PC-3 (cell line): ENCODE measurements at regions of chr22 and their contacts with region 1.

Region 1: GRCh38 chr22:26444777-26445176 is 15.7 kb downstream of the ASPHD2 start:
- DNase-seq: no peak
- ATAC-seq: no peak
- H3K4me3 ChIP-seq: no peak overlapping the region
- H3K27ac ChIP-seq: no peak overlapping the region
- H3K4me1 ChIP-seq: no peaks in the 10 kb centered on the region
- H3K27me3 ChIP-seq: no peaks in the 10 kb centered on the region
- CTCF ChIP-seq: no peak

Region 2: GRCh38 chr22:25182131-25183110 is 1262.4 kb before region 1 on chr22:
- CTCF ChIA-PET with region 1: interaction called, 11 read pairs
- POLR2A ChIA-PET with region 1: no interaction called
- intact Hi-C with region 1: no loop called
- DNase-seq: no peak
- ATAC-seq: no peak
- H3K4me3 ChIP-seq: no peak overlapping the region
- H3K27ac ChIP-seq: no peak overlapping the region
- H3K4me1 ChIP-seq: no peaks in the 10 kb centered on the region
- H3K27me3 ChIP-seq: no peaks in the 10 kb centered on the region
- CTCF ChIP-seq: no peak

Region 3: DNA sequence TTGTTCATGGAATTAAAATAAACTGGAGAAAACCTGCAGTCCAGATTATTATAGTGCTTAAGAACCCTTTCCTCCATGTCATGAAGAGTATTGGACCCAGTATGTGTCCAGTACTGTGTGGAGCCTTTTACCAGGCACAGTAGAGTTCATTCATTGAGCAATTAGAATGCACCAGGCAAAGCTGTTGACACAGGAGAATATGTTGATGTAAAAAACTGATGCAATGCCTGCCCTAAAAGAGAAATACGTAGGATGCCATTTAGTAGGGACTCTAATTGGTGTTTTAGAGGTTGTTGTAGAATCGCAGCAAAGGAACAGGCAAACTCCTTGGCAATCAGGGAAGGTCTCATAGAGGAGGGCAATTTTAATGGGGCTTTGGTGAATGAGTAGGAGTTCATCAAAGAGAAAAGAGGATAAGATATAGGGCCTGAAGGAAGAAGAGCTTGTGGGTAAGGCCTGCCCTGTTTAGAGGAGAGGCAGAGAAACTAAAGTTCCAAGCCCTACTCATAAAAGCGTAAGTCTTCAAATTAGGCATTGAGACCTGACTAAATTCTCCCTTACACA is 149.1 kb before region 1 on chr22:
- CTCF ChIA-PET with region 1: no interaction called
- POLR2A ChIA-PET with region 1: no interaction called
- intact Hi-C with region 1: no loop called
- DNase-seq: no peak
- ATAC-seq: no peak
- H3K4me3 ChIP-seq: no peak overlapping the region
- H3K27ac ChIP-seq: no peak overlapping the region
- H3K4me1 ChIP-seq: no peaks in the 10 kb centered on the region
- H3K27me3 ChIP-seq: peaks cover 29% of the 10 kb centered on the region
- CTCF ChIP-seq: no peak

Region 4: GRCh38 chr22:26330966-26331625 is 113.7 kb before region 1 on chr22:
- CTCF ChIA-PET with region 1: no interaction called
- POLR2A ChIA-PET with region 1: no interaction called
- intact Hi-C with region 1: no loop called
- DNase-seq: peak; percentile 62
- ATAC-seq: peak; percentile 46
- H3K4me3 ChIP-seq: no peak overlapping the region
- H3K27ac ChIP-seq: no peak overlapping the region
- H3K4me1 ChIP-seq: no peaks in the 10 kb centered on the region
- H3K27me3 ChIP-seq: peaks cover 28% of the 10 kb centered on the region
- CTCF ChIP-seq: peak; percentile 85

Region 5: GRCh38 chr22:26428515-26429457 is 16.0 kb before region 1 on chr22 and contains the start of gene ASPHD2:
- CTCF ChIA-PET with region 1: no interaction called
- POLR2A ChIA-PET with region 1: no interaction called
- intact Hi-C with region 1: no loop called
- DNase-seq: peak; percentile 33
- ATAC-seq: peak; percentile 82
- H3K4me3 ChIP-seq: peak within 1 kb of the TSS; percentile 71
- H3K27ac ChIP-seq: no peak within 1 kb of the TSS
- H3K4me1 ChIP-seq: no peaks in the 10 kb centered on the region
- H3K27me3 ChIP-seq: no peaks in the 10 kb centered on the region
- CTCF ChIP-seq: no peak
- total RNA-seq, gene ASPHD2: 2.1 and 2.4 TPM in 2 replicates

Region 6: DNA sequence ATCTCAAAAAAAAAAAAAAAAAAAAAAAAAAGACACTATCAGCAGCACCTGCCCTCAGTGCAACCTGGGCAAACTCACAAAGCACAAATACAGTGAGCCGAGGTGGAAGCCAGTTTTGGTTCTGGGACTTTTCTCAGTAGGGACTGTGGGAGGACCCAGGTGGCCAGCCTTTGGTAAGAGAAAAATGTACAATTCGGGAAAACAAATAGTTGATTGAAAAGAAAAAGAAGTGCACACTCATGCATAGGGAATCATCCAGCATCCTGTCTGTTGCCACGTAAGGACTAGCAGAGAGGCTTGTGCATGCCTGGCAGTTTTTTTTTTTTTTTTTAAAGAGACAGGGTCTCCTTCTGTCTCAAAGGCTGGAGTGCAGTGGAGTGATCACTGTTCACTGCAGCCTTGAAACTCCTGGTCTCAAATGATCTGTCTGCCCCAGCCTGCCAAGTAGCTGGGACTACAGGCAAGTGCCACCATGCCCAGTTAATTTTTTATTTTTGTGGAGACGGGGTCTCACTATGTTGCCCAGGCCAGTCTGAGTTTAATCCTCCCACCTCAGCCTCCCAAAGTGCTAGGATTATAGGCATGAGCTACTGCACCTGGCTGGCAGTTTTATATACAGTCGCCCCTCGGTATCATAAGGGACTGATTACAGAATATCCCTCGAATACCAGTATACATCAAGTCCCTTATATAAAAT is 108.4 kb after region 1 on chr22:
- CTCF ChIA-PET with region 1: interaction called, 10 read pairs
- POLR2A ChIA-PET with region 1: no interaction called
- intact Hi-C with region 1: no loop called
- DNase-seq: peak; percentile 44
- ATAC-seq: peak; percentile 62
- H3K4me3 ChIP-seq: no peak overlapping the region
- H3K27ac ChIP-seq: peak overlapping the region; percentile 47; the same call in 1 of the 2 replicates
- H3K4me1 ChIP-seq: no peaks in the 10 kb centered on the region
- H3K27me3 ChIP-seq: no peaks in the 10 kb centered on the region
- CTCF ChIP-seq: no peak